ENCODE measurements at regions of chr21 and their contacts with region 1.

Region 1: GRCh38 chr21:29195981-29196669 is 65.7 kb downstream of the MAP3K7CL start:
- DNase-seq: peak; percentile 91
- H3K4me3 Mint-ChIP-seq: peak overlapping the region; percentile 63
- H3K27ac Mint-ChIP-seq: peak overlapping the region; percentile 90
- H3K4me1 Mint-ChIP-seq: peaks cover 36% of the 10 kb centered on the region
- H3K27me3 Mint-ChIP-seq: no peaks in the 10 kb centered on the region

Region 2: GRCh38 chr21:28992526-28993292 is 203.4 kb before region 1 on chr21 and contains the start of gene LTN1:
- CTCF ChIA-PET with region 1: no interaction called
- intact Hi-C with region 1: loop called (anchors 1 kb)
- DNase-seq: peak; percentile 100
- H3K4me3 Mint-ChIP-seq: peak within 1 kb of the TSS; percentile 99
- H3K27ac Mint-ChIP-seq: peak within 1 kb of the TSS; percentile 97
- H3K4me1 Mint-ChIP-seq: peaks cover 51% of the 10 kb centered on the region
- H3K27me3 Mint-ChIP-seq: no peaks in the 10 kb centered on the region
- total RNA-seq, gene LTN1: 18.5 to 21.2 TPM

Region 3: DNA sequence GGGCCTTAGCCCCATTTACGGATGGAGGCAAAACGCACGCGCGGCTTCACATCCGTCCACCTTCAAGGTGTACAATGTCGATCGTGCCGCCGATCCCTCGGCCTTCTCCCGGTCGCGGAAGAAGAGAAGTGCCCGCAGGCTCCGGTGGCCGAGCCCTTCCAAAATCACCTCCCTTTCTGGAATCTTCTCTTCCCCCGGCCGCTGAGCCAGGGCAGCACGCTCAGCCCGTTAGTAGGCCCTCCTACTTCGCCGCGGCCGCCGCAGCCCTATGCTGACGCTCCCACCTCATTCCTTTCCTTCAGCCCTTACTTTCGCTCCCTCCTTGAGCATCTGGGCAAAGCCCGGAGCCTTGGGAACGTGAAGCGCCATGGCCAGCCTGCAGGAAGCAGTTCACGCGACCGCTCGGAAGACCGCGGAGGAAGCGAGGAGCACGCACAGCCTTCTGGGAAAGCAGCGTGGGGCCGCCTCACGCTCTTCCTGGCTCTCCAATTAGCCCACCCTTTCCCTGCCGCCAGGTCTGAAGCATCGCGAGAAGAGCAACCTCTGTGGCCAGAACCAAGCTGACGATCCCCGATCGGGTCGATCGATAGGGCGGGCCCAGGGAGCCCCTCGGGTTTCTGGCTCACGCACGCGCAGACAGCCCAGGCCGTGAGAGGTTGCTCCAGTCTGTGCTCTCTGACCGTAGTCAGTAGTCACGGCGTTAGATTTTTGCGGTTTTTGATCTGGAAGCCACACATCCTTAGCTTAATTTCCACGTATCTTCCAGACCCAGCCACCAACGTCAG is 122.7 kb before region 1 on chr21 and contains the start of gene CCT8:
- CTCF ChIA-PET with region 1: no interaction called
- intact Hi-C with region 1: loop called (anchors 1 kb)
- DNase-seq: peak; percentile 99
- H3K4me3 Mint-ChIP-seq: peak within 1 kb of the TSS; percentile 94
- H3K27ac Mint-ChIP-seq: peak within 1 kb of the TSS; percentile 95
- H3K4me1 Mint-ChIP-seq: peaks cover 46% of the 10 kb centered on the region
- H3K27me3 Mint-ChIP-seq: no peaks in the 10 kb centered on the region
- total RNA-seq, gene CCT8: 482 to 515 TPM

Region 4: DNA sequence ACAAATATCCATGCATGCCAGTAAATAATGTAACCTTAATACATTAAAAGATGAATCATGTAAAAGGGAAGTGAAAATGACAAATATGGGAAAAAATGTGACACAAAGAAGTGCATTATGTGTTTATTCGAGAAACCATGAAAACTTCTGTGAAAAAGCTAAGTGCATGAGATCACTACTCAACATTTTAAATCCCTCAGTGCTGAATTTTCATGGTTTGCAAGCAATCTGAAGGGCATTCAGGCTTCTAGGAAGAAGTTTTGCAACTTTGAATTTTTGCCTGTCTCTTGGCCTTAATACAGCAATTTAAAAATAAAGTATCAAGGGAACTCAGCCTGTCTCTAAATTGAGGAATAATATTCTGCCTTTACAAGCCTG is 12.5 kb after region 1 on chr21:
- CTCF ChIA-PET with region 1: interaction called, 10 read pairs
- intact Hi-C with region 1: loop called (anchors 1 kb)
- DNase-seq: no peak
- H3K4me3 Mint-ChIP-seq: no peak overlapping the region
- H3K27ac Mint-ChIP-seq: peak overlapping the region; percentile 75
- H3K4me1 Mint-ChIP-seq: peaks cover 30% of the 10 kb centered on the region
- H3K27me3 Mint-ChIP-seq: no peaks in the 10 kb centered on the region

Region 5: DNA sequence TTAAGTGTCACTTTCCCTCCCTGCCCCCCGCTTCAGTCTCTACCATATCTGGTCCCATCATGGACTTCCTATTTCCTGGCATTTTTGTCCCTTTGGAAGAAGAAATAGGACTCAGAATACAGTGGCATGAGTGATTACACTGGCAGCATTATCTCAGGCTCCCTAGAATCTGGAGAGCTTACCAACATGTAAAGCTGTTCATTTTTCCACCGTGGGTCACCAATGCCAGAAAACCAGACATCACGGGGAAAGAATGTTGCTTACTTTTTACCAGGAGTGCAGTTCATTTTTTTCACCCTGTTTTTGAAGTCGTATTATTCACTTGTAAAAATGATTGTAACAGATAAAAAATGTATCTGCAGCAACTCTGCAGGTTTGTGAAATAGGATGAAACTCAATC is 147.4 kb after region 1 on chr21:
- CTCF ChIA-PET with region 1: interaction called, 4 read pairs
- intact Hi-C with region 1: loop called (anchors 1 kb)
- DNase-seq: no peak
- H3K4me3 Mint-ChIP-seq: no peak overlapping the region
- H3K27ac Mint-ChIP-seq: no peak overlapping the region
- H3K4me1 Mint-ChIP-seq: peaks cover 39% of the 10 kb centered on the region
- H3K27me3 Mint-ChIP-seq: no peaks in the 10 kb centered on the region

Region 6: GRCh38 chr21:30718239-30718909 is 1522.2 kb after region 1 on chr21 and contains the start of gene KRTAP21-3:
- CTCF ChIA-PET with region 1: no interaction called
- intact Hi-C with region 1: loop called (anchors 5 kb)
- DNase-seq: peak; percentile 33
- H3K4me3 Mint-ChIP-seq: no peak within 1 kb of the TSS
- H3K27ac Mint-ChIP-seq: peak within 1 kb of the TSS; percentile 46
- H3K4me1 Mint-ChIP-seq: peaks cover 21% of the 10 kb centered on the region
- H3K27me3 Mint-ChIP-seq: peaks cover 2% of the 10 kb centered on the region
- total RNA-seq, gene KRTAP21-3: not detected

Measured in activated naive CD4-positive, alpha-beta T cell treated with anti-CD3 and anti-CD28 coated beads for 36 hours (primary cell).